ENCODE measurements at regions of chr15 and their contacts with region 1.

Region 1: GRCh38 chr15:29988689-29989088 is 94.1 kb upstream of the GOLGA8J start:
- DNase-seq: peak; percentile 14
- H3K4me3 ChIP-seq: no peak overlapping the region
- H3K27ac ChIP-seq: no peak overlapping the region
- H3K4me1 ChIP-seq: no peaks in the 10 kb centered on the region
- H3K27me3 ChIP-seq: peaks cover under 1 to 4% of the 10 kb centered on the region in 2 experiments
- CTCF ChIP-seq: no peak
- POLR2A ChIP-seq: no peak

Region 2: DNA sequence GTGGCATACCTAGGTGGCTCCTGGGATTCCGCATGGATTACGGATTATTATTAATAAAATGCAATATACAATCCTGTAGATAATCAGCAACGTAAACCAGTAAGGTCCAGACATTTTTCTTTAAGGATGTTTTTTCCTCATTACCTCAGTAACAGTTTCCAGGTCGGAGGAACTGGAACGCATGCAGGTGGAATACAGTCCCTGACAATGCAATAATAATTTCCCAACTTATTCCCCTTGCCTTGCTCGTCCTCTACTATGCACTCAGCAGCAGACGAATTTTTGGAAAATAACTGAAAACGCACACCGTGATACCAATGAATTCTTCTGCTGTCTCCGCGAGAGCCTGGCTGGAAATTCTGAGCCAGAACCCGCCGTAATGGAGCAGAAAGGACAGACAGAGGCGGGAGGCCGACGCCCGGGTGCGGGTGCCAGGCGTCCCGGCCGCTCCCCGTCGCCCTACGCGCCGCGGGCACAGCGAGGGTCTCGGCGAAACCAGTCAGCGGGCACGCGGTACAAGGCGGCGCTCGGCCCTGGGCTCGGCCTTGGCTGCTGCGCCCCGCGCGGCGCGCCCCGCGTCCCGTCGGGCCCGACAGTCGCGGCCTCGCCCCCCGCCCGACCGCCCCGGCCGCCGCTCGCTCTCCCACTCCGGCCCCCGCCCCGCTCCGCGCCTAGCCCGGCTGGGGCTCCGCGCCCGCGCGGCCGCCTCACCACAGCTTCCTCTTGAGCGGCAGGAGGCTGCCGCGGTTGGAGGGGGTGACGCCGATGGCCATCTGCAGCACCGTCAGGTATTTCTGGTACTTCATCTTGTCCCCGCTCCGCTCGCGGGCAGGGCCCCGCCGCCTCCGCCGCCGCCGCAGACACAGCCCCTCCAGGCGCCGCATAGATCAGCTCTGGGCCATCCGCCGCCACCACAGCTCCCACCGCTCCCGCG is 20.5 kb before region 1 on chr15:
- CTCF ChIA-PET with region 1: no interaction called
- POLR2A ChIA-PET with region 1: no interaction called
- dilution Hi-C with region 1: no loop called
- intact Hi-C with region 1: no loop called
- DNase-seq: no peak
- H3K4me3 ChIP-seq: peak overlapping the region in 2 of 3 experiments; percentile 27 to 41
- H3K27ac ChIP-seq: no peak overlapping the region
- H3K4me1 ChIP-seq: peaks cover 2% of the 10 kb centered on the region
- H3K27me3 ChIP-seq: peaks cover 38 to 49% of the 10 kb centered on the region in 2 experiments
- CTCF ChIP-seq: no peak
- POLR2A ChIP-seq: no peak

Region 3: GRCh38 chr15:30043211-30043655 is 54.5 kb after region 1 on chr15:
- CTCF ChIA-PET with region 1: no interaction called
- POLR2A ChIA-PET with region 1: no interaction called
- dilution Hi-C with region 1: no loop called
- intact Hi-C with region 1: loop called (anchors 10 kb)
- DNase-seq: peak; percentile 35
- H3K4me3 ChIP-seq: no peak overlapping the region
- H3K27ac ChIP-seq: no peak overlapping the region
- H3K4me1 ChIP-seq: no peaks in the 10 kb centered on the region
- H3K27me3 ChIP-seq: no peaks in the 10 kb centered on the region
- CTCF ChIP-seq: no peak
- POLR2A ChIP-seq: no peak

Measured in endothelial cell of umbilical vein (primary cell).